ENCODE measurements at regions of chr15 and their contacts with region 1.

Region 1: DNA sequence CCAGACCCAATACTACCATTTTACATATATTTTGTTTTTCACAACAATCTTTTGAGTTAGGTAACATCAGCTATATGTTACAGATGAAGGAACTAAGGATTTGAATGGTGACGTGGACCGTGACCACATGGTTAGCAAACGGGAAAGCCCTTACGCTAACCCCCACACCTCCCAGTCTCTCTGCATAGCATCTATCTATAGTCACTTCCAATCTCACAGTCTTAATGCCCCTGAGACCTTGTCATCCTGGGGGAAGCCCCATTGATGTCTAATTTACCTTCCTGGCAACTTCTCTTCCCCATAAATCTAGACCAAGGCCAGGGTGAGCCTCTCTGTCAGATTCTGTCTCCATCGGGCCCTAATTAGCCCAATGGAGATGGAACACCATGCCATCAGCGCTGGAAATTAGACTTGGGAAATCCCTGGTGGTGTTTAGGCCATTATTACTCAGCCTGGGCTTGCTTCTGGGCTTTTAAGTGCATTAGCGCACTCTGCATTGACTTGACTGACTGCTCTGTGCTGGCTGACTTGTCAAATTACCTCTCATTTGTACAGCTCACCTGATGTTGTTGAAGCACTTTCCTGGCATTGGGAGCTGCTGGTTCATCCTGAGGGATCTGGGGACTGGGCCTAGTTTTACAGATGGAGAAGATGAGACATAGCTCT is 34.0 kb upstream of the SH3GL3 start:
- DNase-seq: no peak
- H3K4me3 ChIP-seq: no peak overlapping the region
- H3K27ac ChIP-seq: no peak overlapping the region
- H3K4me1 ChIP-seq: no peaks in the 10 kb centered on the region
- H3K27me3 ChIP-seq: no peaks in the 10 kb centered on the region
- CTCF ChIP-seq: no peak

Region 2: GRCh38 chr15:83356501-83357399 is 56.4 kb before region 1 on chr15:
- CTCF ChIA-PET with region 1: no interaction called
- dilution Hi-C with region 1: loop called (anchors 5 kb)
- in situ Hi-C with region 1: no loop called
- intact Hi-C with region 1: no loop called
- DNase-seq: peak; percentile 46
- H3K4me3 ChIP-seq: no peak overlapping the region
- H3K27ac ChIP-seq: peak overlapping the region; percentile 46
- H3K4me1 ChIP-seq: peaks cover 36% of the 10 kb centered on the region
- H3K27me3 ChIP-seq: no peaks in the 10 kb centered on the region
- CTCF ChIP-seq: no peak

Region 3: DNA sequence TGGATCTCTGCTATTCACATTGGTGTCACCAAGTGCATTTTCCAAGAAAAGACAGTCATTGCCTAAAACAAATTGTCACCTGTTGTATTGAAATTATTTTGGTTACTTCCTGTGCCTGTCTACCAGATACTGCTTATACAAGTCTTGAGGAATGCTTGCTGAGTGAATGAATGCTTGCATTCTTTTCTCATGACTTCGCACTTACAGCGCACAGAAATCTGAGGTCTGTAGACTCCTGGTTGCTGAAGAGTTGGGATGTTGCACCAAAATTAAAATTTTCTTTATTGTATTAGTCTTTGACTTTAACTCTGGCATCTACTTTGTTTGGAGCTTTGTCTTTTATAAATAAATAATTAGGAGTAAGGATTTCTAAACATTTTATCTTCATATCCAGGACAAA is 62.4 kb after region 1 on chr15:
- CTCF ChIA-PET with region 1: no interaction called
- dilution Hi-C with region 1: no loop called
- in situ Hi-C with region 1: no loop called
- intact Hi-C with region 1: no loop called
- DNase-seq: peak; percentile 36
- H3K4me3 ChIP-seq: no peak overlapping the region
- H3K27ac ChIP-seq: no peak overlapping the region
- H3K4me1 ChIP-seq: no peaks in the 10 kb centered on the region
- H3K27me3 ChIP-seq: no peaks in the 10 kb centered on the region
- CTCF ChIP-seq: no peak

Measured in mammary epithelial cell (primary cell).